Transverse colon (tissue), 4 donors: ENCODE measurements at regions of chr1 and their contacts with region 1.

Region 1: DNA sequence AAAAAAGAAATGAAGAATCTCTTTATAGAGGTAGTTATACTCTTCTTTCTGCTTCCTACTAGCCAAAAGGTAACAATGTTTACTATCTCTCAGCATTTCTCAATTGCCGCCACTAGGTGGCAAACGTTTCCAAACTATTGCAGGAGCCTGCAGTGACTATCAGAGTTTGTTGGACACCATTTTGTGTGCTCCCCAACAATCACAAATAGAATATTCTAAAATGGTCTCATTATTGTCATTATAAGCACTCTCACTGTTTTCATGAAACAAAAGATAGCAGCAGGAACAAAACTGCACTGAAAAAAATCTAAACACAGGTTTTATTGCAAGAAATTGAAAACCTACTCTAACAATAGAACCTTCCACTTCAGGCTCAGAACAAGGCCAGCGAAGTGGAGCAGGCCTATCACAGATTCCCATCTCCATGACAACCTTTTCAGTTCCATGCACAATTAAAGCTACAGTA is 83.9 kb upstream of the PLPPR4 start:
- DNase-seq: peak; percentile 71
- H3K4me3 ChIP-seq: no peak overlapping the region
- H3K27ac ChIP-seq: no peak overlapping the region
- H3K4me1 ChIP-seq: no peaks in the 10 kb centered on the region
- H3K27me3 ChIP-seq: no peaks in the 10 kb centered on the region
- CTCF ChIP-seq: peak; percentile 72 to 81 (median 73)
- EP300 ChIP-seq: no peak
- POLR2A ChIP-seq: no peak

Region 2: GRCh38 chr1:99239694-99240093 is 59.3 kb after region 1 on chr1:
- in situ Hi-C with region 1: loop called in 1 of 4 experiments (anchors 10 kb)
- intact Hi-C with region 1: no loop called
- DNase-seq: no peak
- H3K4me3 ChIP-seq: no peak overlapping the region
- H3K27ac ChIP-seq: no peak overlapping the region
- H3K4me1 ChIP-seq: no peaks in the 10 kb centered on the region
- H3K27me3 ChIP-seq: no peaks in the 10 kb centered on the region
- CTCF ChIP-seq: no peak
- EP300 ChIP-seq: no peak
- POLR2A ChIP-seq: no peak

Region 3: GRCh38 chr1:99481391-99481996 is 301.1 kb after region 1 on chr1:
- in situ Hi-C with region 1: loop called in 1 of 4 experiments (anchors 25 kb)
- intact Hi-C with region 1: no loop called
- DNase-seq: peak; percentile 23
- H3K4me3 ChIP-seq: no peak overlapping the region
- H3K27ac ChIP-seq: no peak overlapping the region
- H3K4me1 ChIP-seq: no peaks in the 10 kb centered on the region
- H3K27me3 ChIP-seq: no peaks in the 10 kb centered on the region
- CTCF ChIP-seq: peak; percentile 64 to 76 (median 67)
- EP300 ChIP-seq: no peak
- POLR2A ChIP-seq: no peak

Region 4: GRCh38 chr1:99685516-99686180 is 505.3 kb after region 1 on chr1:
- in situ Hi-C with region 1: loop called in 2 of 4 experiments (anchors 25 kb)
- intact Hi-C with region 1: no loop called
- DNase-seq: peak; percentile 68
- H3K4me3 ChIP-seq: no peak overlapping the region
- H3K27ac ChIP-seq: no peak overlapping the region
- H3K4me1 ChIP-seq: no peaks in the 10 kb centered on the region
- H3K27me3 ChIP-seq: no peaks in the 10 kb centered on the region
- CTCF ChIP-seq: peak; percentile 39 to 48 (median 46)
- EP300 ChIP-seq: no peak
- POLR2A ChIP-seq: no peak

Region 5: DNA sequence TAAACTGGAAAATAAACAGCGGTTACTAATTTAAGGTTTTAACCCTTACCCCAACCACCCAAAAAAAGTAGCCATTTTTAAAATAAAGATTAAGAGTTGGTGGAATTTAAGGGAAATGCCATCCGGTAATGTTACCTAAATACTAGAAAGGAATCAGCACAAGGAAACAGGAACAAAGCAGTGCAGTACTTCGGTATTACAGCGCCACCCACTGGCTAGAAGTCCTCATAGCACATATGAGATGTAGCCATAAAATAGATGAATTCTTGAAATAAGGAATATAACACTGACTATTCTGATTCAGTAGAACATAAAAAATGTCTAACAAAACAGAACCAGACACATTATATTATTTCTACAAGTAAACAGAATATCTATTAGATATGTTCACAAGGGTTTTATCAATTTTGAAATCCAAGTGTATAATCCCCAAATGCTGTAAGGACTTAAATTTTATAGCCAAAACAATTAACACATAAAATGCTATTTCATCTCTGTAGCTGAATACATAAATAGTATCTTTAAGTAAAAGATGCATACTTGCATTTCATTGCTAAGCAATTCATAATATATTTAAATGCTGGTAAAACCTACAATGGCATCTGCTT is 527.3 kb after region 1 on chr1:
- in situ Hi-C with region 1: loop called in 2 of 4 experiments (anchors 10 to 25 kb)
- intact Hi-C with region 1: loop called (anchors 10 kb)
- DNase-seq: peak; percentile 71
- H3K4me3 ChIP-seq: no peak overlapping the region
- H3K27ac ChIP-seq: no peak overlapping the region
- H3K4me1 ChIP-seq: no peaks in the 10 kb centered on the region
- H3K27me3 ChIP-seq: no peaks in the 10 kb centered on the region
- CTCF ChIP-seq: peak; percentile 74 to 80 (median 77)
- EP300 ChIP-seq: no peak
- POLR2A ChIP-seq: no peak